T-cell (primary cell): ENCODE measurements at regions of chr18 and their contacts with region 1.

Region 1: DNA sequence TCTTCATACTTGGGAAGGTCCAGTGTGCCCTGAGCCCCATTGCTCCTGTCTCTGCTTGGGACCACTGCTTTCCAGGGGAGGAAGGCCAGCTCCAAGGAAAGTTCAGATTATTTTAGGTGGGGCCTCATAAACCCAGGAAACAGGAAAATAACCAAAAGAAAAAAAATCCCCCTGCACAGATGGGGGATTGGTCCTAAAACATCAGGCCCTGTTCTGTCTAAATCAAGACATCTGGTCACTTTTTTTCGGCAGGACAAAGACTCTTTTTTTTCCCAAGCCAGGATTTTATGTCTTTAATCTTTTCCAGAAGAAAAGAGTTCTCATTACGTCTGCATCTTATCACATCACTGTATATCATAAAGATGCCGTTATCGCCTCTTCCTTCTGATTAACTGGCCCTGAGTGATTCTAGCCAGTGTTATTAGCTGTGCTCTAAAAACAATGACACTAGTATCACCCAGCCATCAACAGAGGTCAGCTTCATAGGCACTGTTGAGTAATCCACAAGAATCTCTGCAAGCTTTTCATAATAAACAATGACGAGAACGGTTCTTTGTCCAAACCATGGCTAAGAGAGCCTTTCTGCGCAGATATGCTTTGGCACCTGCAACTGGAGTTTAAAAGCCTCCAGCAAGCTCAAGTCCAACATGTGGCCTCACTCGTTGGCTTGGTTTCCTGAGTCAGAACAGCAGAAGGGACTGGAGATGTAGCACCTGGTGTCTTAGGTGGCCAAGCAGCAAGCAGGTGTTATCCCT is 138.2 kb downstream of the VAPA start:
- DNase-seq: no peak
- ATAC-seq: no peak
- H3K4me3 ChIP-seq: no peak overlapping the region
- H3K4me3 Mint-ChIP-seq: no peak overlapping the region
- H3K27ac ChIP-seq: no peak overlapping the region
- H3K27ac Mint-ChIP-seq: no peak overlapping the region
- H3K4me1 ChIP-seq: no peaks in the 10 kb centered on the region
- H3K4me1 Mint-ChIP-seq: no peaks in the 10 kb centered on the region
- H3K27me3 ChIP-seq: peaks cover 0 to 8% of the 10 kb centered on the region in 2 experiments
- H3K27me3 Mint-ChIP-seq: peaks cover 0 to 8% of the 10 kb centered on the region in 2 donors

Region 2: DNA sequence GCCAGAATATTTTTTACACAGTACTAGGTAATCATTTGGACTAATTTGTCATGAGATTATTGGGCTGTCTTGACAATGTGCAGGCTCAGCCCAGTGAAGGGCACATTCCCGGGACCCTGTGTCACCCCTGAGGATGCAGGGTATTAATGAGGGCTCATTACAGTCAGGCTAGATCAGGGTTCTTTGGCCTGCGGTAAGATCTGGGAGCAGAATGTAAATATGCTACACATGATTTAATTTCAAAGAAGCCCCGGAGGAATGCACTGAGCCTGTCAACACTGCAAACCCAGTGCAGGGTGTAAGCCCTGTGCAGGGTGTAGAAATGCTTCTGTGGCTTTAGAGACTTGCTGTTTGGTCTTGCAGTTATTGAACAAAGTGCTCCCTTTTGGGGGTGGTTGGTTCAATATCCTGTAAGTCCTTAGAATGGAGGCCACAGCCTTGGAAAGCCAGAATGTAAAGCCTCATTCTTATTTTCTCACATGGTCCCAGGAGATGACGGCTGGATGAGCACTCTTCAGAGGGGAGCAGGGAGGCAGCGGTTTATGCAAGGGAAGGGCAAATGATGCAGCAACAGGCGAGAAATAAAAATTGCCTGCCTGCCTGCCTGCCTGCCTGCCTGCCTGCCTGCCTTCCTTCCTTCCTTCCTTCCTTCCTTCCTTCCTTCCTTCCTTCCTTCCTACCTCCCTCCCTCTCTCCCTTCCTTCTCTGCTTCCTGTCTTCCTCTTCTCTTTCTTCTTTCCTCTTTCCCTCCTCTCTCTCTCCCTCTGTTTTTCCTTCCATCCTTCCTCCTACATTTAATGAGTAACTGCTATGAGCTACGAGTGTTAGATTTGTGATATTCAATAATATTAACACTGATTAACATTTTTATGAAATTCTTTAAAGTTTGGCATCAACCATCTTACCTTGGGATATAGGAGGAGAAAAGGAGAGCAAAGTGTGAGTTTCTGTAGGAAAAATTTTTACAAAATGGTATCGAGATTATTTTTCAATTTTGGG is 10.5 kb after region 1 on chr18:
- CTCF ChIA-PET with region 1: no interaction called
- POLR2A ChIA-PET with region 1: interaction called in 1 of 2 experiments, 21 read pairs
- DNase-seq: no peak
- ATAC-seq: no peak
- H3K4me3 ChIP-seq: no peak overlapping the region
- H3K4me3 Mint-ChIP-seq: no peak overlapping the region
- H3K27ac ChIP-seq: no peak overlapping the region
- H3K27ac Mint-ChIP-seq: no peak overlapping the region
- H3K4me1 ChIP-seq: no peaks in the 10 kb centered on the region
- H3K4me1 Mint-ChIP-seq: no peaks in the 10 kb centered on the region
- H3K27me3 ChIP-seq: peaks cover 0 to 21% of the 10 kb centered on the region in 2 experiments
- H3K27me3 Mint-ChIP-seq: peaks cover 5% of the 10 kb centered on the region in 2 donors